GM12878 (cell line): ENCODE measurements at regions of chr5 and their contacts with region 1.

Region 1: DNA sequence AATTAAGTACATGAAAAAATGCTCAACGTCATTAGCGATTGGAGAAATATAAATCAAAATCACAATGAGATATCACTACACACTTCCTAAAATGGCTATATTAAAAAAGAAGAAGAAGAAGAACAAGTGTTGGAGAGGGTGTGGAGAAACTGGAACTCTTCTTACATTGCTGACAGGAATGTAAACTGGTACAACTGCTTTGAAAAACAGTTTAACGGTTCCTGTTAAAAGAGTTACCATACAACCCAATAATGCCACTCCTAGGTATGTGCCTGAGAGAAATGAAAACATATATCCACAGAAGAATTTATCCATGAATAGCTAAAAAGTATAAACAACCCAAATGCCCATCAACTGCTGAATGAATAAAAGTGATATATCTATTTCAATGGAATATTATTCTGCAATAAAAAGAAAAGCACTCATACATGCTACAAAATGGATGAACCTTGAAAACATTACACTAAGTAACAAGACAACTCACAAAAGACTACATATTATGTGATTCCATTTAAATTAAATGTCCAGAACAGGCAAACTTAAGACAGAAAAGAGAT is 9.0 kb downstream of the FEM1C start:
- DNase-seq: no peak
- ATAC-seq: no peak
- H3K4me3 ChIP-seq: no peak overlapping the region
- H3K27ac ChIP-seq: no peak overlapping the region
- H3K4me1 ChIP-seq: no peaks in the 10 kb centered on the region
- H3K27me3 ChIP-seq: no peaks in the 10 kb centered on the region
- CTCF ChIP-seq: no peak
- EP300 ChIP-seq: no peak
- POLR2A ChIP-seq: no peak
- RAD21 ChIP-seq: no peak

Region 2: GRCh38 chr5:115494570-115495289 is 40.8 kb before region 1 on chr5:
- CTCF ChIA-PET with region 1: no interaction called
- POLR2A ChIA-PET with region 1: no interaction called
- RAD21 ChIA-PET with region 1: interaction called, 3 read pairs
- SMC1A ChIA-PET with region 1: interaction called, 13 read pairs
- in situ Hi-C with region 1: no loop called
- intact Hi-C with region 1: no loop called
- DNase-seq: no peak
- ATAC-seq: peak; percentile 88
- H3K4me3 ChIP-seq: no peak overlapping the region
- H3K27ac ChIP-seq: no peak overlapping the region
- H3K4me1 ChIP-seq: peaks cover 10% of the 10 kb centered on the region; the same call in 1 of the 2 replicates
- H3K27me3 ChIP-seq: no peaks in the 10 kb centered on the region
- CTCF ChIP-seq: no peak
- EP300 ChIP-seq: peak in 1 of 2 experiments; percentile 34; a peak in 1 of 4 replicates
- POLR2A ChIP-seq: no peak
- RAD21 ChIP-seq: no peak

Region 3: DNA sequence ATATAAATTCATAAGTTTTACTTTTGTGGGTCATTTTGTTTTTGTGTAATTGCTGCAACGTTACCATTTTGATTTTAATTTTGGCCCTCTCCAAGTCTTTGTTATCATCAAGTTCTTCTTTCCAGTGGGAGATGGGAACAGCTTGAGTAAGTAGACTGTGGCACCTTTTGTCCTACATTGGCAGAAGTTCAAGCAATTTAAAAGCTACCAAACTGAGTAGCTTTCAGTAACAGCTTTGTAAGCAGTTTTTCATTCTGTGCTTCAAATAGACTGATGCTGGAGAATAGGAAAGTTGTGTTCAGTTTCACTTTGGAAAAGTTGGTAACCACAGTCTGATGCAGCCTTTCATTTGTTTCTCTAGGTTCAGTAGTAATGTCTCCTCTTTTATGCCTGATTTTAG is 138.0 kb after region 1 on chr5:
- CTCF ChIA-PET with region 1: no interaction called
- POLR2A ChIA-PET with region 1: no interaction called
- RAD21 ChIA-PET with region 1: no interaction called
- SMC1A ChIA-PET with region 1: no interaction called
- in situ Hi-C with region 1: no loop called
- intact Hi-C with region 1: no loop called
- DNase-seq: no peak
- ATAC-seq: no peak
- H3K4me3 ChIP-seq: no peak overlapping the region
- H3K27ac ChIP-seq: no peak overlapping the region
- H3K4me1 ChIP-seq: no peaks in the 10 kb centered on the region
- H3K27me3 ChIP-seq: no peaks in the 10 kb centered on the region
- CTCF ChIP-seq: no peak
- EP300 ChIP-seq: no peak
- POLR2A ChIP-seq: no peak
- RAD21 ChIP-seq: no peak